ENCODE measurements at regions of chr1 and their contacts with region 1.

Region 1: GRCh38 chr1:235504496-235505222 is 407 bp upstream of the B3GALNT2 start:
- DNase-seq: peak; percentile 96
- ATAC-seq: peak; percentile 81
- H3K4me3 Mint-ChIP-seq: peak overlapping the region; percentile 96
- H3K27ac Mint-ChIP-seq: peak overlapping the region; percentile 95
- H3K4me1 Mint-ChIP-seq: peaks cover 20% of the 10 kb centered on the region
- H3K27me3 Mint-ChIP-seq: no peaks in the 10 kb centered on the region
- CTCF ChIP-seq: no peak

Region 2: DNA sequence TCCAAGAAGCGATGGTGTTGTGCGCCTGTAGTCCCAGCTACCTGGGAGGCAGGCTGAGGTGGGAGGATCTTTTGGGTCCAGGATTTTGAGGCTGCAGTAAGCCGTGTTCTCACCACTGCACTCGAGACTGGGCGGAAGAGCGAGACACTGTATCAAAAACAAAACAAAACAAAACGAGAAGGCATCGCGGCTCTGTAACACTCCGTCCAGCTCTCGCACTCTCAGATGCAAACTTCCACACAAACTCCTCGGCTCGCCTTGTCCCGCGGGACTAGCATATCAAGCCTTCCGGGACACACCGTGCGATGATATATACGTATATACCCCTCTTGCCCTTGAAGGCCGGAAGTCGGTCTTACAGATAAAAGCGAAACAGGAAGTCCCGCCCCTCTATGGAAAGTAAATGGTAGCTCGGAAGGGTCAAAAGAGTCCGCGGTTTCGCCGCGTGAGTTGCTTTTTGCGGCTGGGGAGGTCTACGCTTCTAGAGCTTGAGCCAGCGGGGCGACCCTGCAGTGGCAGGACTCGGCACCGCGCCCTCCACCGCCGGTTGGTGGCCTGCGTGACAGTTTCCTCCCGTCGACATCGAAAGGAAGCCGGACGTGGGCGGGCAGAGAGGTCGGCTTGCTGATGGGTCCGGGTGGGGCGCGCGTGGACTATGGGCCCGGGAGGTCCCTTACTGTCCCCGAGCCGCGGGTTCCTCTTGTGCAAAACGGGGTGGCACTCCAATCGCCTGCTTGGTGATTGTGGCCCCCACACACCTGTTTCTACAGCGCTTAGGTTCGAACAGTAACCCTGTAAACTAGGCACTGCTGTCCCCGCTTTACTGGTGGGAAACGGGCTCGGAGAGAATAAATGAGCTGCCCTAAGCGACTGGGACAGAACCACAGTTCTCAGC is 1131.3 kb before region 1 on chr1 and contains the start of gene COA6:
- CTCF ChIA-PET with region 1: no interaction called
- POLR2A ChIA-PET with region 1: no interaction called
- intact Hi-C with region 1: loop called (anchors 1 kb)
- DNase-seq: peak; percentile 88
- ATAC-seq: peak; percentile 86
- H3K4me3 Mint-ChIP-seq: peak within 1 kb of the TSS; percentile 99
- H3K27ac Mint-ChIP-seq: peak within 1 kb of the TSS; percentile 99
- H3K4me1 Mint-ChIP-seq: peaks cover 30% of the 10 kb centered on the region
- H3K27me3 Mint-ChIP-seq: no peaks in the 10 kb centered on the region
- CTCF ChIP-seq: no peak
- total RNA-seq, gene COA6: 20.7 and 24.0 TPM in 2 replicates

Region 3: GRCh38 chr1:234528074-234528865 is 976.4 kb before region 1 on chr1:
- CTCF ChIA-PET with region 1: no interaction called
- POLR2A ChIA-PET with region 1: no interaction called
- intact Hi-C with region 1: no loop called
- DNase-seq: no peak
- ATAC-seq: no peak
- H3K4me3 Mint-ChIP-seq: no peak overlapping the region
- H3K27ac Mint-ChIP-seq: no peak overlapping the region
- H3K4me1 Mint-ChIP-seq: peaks cover 27% of the 10 kb centered on the region
- H3K27me3 Mint-ChIP-seq: peaks cover 6% of the 10 kb centered on the region
- CTCF ChIP-seq: no peak

Region 4: DNA sequence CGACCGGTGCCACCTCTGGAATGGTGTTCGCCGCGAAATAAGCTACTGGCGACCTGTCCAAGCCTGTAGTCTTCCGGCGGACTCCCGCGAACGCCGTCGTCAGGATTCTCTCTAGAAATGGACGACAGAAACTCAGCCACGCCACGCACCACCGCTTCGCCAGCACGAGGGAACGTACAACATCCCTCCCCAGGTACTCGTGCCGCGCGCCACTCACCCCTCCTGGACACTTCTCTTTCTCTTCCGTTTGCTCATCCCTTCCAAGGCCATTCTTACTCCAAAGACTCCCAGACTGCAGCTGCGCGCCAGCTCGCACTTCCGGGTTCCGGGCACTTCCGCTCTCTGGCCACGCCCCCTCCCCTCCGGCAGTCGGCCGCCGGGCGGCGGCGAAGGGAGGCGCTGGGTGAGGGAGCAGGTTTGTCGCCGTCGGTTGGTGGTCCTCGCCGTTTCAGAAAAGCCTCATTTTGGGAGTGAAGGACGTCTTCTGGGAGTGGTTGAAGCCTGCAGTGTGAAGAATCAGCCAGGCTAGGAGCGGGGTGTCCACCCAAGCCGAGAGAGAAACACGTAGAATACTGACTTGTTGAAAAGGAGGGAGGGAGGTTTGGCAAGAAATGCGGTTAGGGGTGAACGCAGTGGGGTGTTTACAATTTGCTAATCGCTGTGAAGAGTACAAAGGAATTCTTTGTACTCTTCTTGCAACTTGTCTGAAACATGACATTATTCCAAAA is 343.5 kb before region 1 on chr1 and contains the start of gene RBM34:
- CTCF ChIA-PET with region 1: no interaction called
- POLR2A ChIA-PET with region 1: interaction called, 7 read pairs
- intact Hi-C with region 1: loop called (anchors 1 kb)
- DNase-seq: peak; percentile 90
- ATAC-seq: peak; percentile 94
- H3K4me3 Mint-ChIP-seq: peak within 1 kb of the TSS; percentile 96
- H3K27ac Mint-ChIP-seq: peak within 1 kb of the TSS; percentile 99
- H3K4me1 Mint-ChIP-seq: peaks cover 21% of the 10 kb centered on the region
- H3K27me3 Mint-ChIP-seq: no peaks in the 10 kb centered on the region
- CTCF ChIP-seq: no peak
- total RNA-seq, gene RBM34: 122 and 128 TPM in 2 replicates

Region 5: GRCh38 chr1:235367000-235367908 is 137.4 kb before region 1 on chr1 and contains the start of gene TBCE:
- CTCF ChIA-PET with region 1: no interaction called
- POLR2A ChIA-PET with region 1: no interaction called
- intact Hi-C with region 1: loop called (anchors 1 kb)
- DNase-seq: peak; percentile 80
- ATAC-seq: peak; percentile 100
- H3K4me3 Mint-ChIP-seq: peak within 1 kb of the TSS; percentile 97
- H3K27ac Mint-ChIP-seq: peak within 1 kb of the TSS; percentile 89
- H3K4me1 Mint-ChIP-seq: peaks cover 29% of the 10 kb centered on the region
- H3K27me3 Mint-ChIP-seq: no peaks in the 10 kb centered on the region
- CTCF ChIP-seq: no peak
- total RNA-seq, gene TBCE: 13.9 and 19.1 TPM in 2 replicates

Region 6: GRCh38 chr1:235971571-235972310 is 467.1 kb after region 1 on chr1:
- CTCF ChIA-PET with region 1: interaction called, 3 read pairs
- POLR2A ChIA-PET with region 1: interaction called, 5 read pairs
- intact Hi-C with region 1: loop called (anchors 5 kb)
- DNase-seq: peak; percentile 80
- ATAC-seq: peak; percentile 98
- H3K4me3 Mint-ChIP-seq: peak overlapping the region; percentile 78
- H3K27ac Mint-ChIP-seq: peak overlapping the region; percentile 96
- H3K4me1 Mint-ChIP-seq: peaks cover 19% of the 10 kb centered on the region
- H3K27me3 Mint-ChIP-seq: no peaks in the 10 kb centered on the region
- CTCF ChIP-seq: no peak

Region 7: GRCh38 chr1:236523701-236524141 is 1019.1 kb after region 1 on chr1 and contains the start of gene LGALS8:
- CTCF ChIA-PET with region 1: no interaction called
- POLR2A ChIA-PET with region 1: no interaction called
- intact Hi-C with region 1: loop called (anchors 10 kb)
- DNase-seq: peak; percentile 69
- ATAC-seq: peak; percentile 60
- H3K4me3 Mint-ChIP-seq: peak within 1 kb of the TSS; percentile 95
- H3K27ac Mint-ChIP-seq: peak within 1 kb of the TSS; percentile 90
- H3K4me1 Mint-ChIP-seq: peaks cover 12% of the 10 kb centered on the region
- H3K27me3 Mint-ChIP-seq: no peaks in the 10 kb centered on the region
- CTCF ChIP-seq: no peak
- total RNA-seq, gene LGALS8: 36.0 and 37.4 TPM in 2 replicates